Heart left ventricle (tissue), 16 donors: ENCODE measurements at regions of chr4 and their contacts with region 1.

Region 1: GRCh38 chr4:124691801-124692200 is 20.7 kb downstream of the ANKRD50 start:
- DNase-seq: no peak
- ATAC-seq: no peak
- H3K4me3 ChIP-seq: no peak overlapping the region
- H3K27ac ChIP-seq: no peak overlapping the region
- H3K4me1 ChIP-seq: peaks cover 0 to 4% (median 0%) of the 10 kb centered on the region in 12 donors
- H3K27me3 ChIP-seq: no peaks in the 10 kb centered on the region
- CTCF ChIP-seq: no peak
- POLR2A ChIP-seq: no peak

Region 2: GRCh38 chr4:124573076-124573475 is 118.7 kb before region 1 on chr4:
- intact Hi-C with region 1: no loop called
- DNase-seq: no peak
- ATAC-seq: no peak
- H3K4me3 ChIP-seq: no peak overlapping the region
- H3K27ac ChIP-seq: no peak overlapping the region
- H3K4me1 ChIP-seq: no peaks in the 10 kb centered on the region
- H3K27me3 ChIP-seq: no peaks in the 10 kb centered on the region
- CTCF ChIP-seq: no peak
- POLR2A ChIP-seq: no peak

Region 3: DNA sequence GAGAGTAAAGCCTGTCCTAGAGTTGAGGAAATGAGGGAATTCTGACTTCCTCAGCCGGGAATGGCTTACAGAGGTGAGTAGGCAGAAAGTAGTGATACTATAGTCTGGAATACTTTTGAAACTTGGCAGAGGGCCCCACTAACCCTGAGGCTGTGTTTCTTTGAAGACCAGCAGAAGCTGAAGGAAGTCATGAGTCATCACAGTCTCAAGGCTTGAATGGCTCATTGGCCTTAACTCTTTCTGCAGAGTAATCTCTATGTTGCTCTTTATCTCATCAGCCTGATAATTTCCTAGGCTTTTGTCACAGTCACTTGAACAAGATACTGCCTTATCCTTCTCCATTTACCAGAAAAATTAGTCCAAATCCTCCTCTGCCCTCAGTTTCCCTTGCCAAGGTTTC is 60.0 kb before region 1 on chr4:
- intact Hi-C with region 1: loop called in 1 of 10 experiments (anchors 2 kb)
- DNase-seq: peak in 3 of 5 donors; percentile 56 to 73 (median 70)
- ATAC-seq: peak; percentile 67 to 97 (median 91)
- H3K4me3 ChIP-seq: no peak overlapping the region
- H3K27ac ChIP-seq: peak overlapping the region in 1 of 12 donors; percentile 27
- H3K4me1 ChIP-seq: peaks cover 0 to 7% (median 0%) of the 10 kb centered on the region in 12 donors
- H3K27me3 ChIP-seq: no peaks in the 10 kb centered on the region
- CTCF ChIP-seq: no peak
- POLR2A ChIP-seq: no peak